HCT116 (cell line): ENCODE measurements at regions of chr11 and their contacts with region 1.

Region 1: DNA sequence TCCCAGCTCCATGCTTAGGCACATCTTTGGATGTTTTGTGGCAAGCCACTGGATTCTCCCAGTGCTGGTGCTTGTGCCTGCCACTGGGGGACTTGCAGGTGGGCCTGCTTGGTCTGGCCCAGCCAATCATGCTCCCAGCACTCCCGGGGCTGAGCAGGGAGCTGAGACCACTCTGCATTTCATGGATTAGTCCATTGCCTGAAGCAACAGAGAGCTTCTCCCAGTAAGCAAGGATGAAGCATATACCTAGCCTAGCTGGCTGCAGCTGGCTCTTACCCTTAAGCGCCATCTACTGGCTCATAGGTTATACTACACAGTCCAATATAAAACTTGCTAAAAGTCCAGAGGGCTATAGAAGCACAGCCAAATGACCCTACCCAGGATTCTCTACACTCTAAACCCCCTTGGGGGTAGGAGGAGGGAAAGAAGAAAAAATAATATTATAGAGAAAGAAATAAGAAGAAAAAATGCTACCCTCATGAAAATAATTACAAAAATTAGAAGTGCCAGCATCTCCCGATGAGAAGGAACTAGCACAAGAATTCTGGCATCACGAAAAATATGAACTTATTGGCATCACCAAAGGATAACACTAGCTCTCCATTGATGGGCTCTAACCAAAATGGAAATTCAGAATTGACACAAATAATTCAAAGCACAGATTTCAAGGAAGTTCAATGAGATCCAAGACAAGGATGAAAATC is 275.3 kb downstream of the C11orf87 start:
- DNase-seq: peak; percentile 23
- ATAC-seq: peak; percentile 93
- H3K4me3 ChIP-seq: no peak overlapping the region
- H3K27ac ChIP-seq: no peak overlapping the region
- H3K4me1 ChIP-seq: peaks cover 0 to 19% of the 10 kb centered on the region in 2 experiments; a peak in 1 of 4 replicates
- H3K27me3 ChIP-seq: no peaks in the 10 kb centered on the region
- CTCF ChIP-seq: peak; percentile 39 to 79 (median 72); a peak in 5 of 6 replicates
- POLR2A ChIP-seq: no peak
- RAD21 ChIP-seq: peak; percentile 79

Region 2: DNA sequence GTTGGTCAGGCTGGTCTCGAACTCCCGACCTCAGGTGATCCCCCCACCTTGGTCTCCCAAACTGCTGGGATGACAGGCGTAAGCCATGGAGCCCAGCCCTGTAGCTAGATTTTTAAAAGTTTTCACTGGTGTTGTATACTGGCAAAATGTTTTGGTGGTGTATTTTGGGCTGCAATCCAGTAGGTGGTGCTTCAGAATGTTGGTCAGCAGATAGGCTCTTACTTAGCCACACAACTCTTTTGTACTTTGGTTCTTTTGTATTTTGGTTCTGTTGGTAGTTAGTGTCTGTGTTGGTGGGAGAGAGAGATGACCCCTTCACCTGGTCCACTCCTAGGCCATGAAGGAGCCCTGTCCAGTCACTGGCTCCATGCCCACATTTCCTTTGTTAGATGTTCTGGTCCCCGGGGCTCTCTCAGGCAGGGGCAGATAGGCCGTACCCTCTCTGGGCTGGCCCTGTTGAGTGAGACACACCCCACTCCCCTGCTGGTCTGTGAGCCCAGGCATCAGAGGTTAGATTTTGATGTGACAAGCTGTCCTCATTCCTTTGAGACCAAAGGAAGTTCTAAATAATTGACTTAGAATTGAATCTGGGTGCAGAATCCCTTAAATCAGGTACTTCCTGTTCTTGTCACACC is 908.6 kb before region 1 on chr11:
- CTCF ChIA-PET with region 1: no interaction called
- POLR2A ChIA-PET with region 1: no interaction called
- RAD21 ChIA-PET with region 1: no interaction called
- intact Hi-C with region 1: loop called (anchors 1 kb)
- DNase-seq: peak; percentile 21
- ATAC-seq: peak; percentile 86
- H3K4me3 ChIP-seq: no peak overlapping the region
- H3K27ac ChIP-seq: peak overlapping the region; percentile 0; the same call in 1 of the 2 replicates
- H3K4me1 ChIP-seq: peaks cover 27 to 30% of the 10 kb centered on the region in 2 experiments
- H3K27me3 ChIP-seq: no peaks in the 10 kb centered on the region
- CTCF ChIP-seq: peak; percentile 34 to 59 (median 55); a peak in 5 of 6 replicates
- POLR2A ChIP-seq: no peak
- RAD21 ChIP-seq: peak; percentile 68

Region 3: DNA sequence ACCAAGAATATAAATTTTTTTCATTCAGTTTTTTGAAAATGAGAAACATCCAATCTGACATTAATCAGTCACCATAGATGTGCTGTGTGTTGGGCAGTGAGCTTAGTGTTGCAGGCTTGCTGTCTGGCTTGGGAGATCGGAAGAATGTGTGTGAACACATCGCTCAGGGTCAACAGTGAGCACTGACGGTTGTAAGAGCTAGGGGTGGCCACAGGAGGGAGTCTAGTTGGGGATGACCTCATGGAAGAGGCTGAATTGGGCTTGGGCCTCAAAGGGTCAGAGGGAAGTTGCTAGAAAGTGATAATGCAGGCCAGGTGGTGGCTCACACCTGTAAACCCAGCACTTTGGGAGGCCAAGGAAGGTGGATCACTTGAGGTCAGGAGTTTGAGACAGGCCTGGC is 657.0 kb before region 1 on chr11:
- CTCF ChIA-PET with region 1: interaction called, 3 read pairs
- POLR2A ChIA-PET with region 1: no interaction called
- RAD21 ChIA-PET with region 1: no interaction called
- intact Hi-C with region 1: loop called (anchors 2 kb)
- DNase-seq: peak; percentile 19
- ATAC-seq: peak; percentile 95
- H3K4me3 ChIP-seq: no peak overlapping the region
- H3K27ac ChIP-seq: no peak overlapping the region
- H3K4me1 ChIP-seq: no peaks in the 10 kb centered on the region
- H3K27me3 ChIP-seq: no peaks in the 10 kb centered on the region
- CTCF ChIP-seq: peak; percentile 6 to 60 (median 58); a peak in 4 of 6 replicates
- POLR2A ChIP-seq: no peak
- RAD21 ChIP-seq: peak; percentile 46

Region 4: DNA sequence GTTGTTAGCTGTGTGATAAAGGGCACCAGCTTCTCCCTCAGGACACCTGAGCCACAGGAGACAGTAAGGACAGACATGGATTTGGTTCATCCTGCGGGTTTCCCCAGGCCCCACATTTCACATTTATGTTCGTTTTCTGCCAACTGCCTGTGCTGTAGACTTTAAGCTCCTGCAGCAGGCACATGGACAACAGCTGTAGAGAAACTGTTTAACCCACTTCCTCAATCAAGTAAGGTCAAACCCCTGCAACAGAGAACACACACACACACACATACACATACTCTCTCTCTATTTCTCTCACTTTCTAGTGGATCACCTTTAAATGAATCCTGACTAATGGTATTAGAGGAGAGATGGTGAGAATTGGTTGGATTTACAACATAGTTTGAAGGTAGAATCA is 184.6 kb before region 1 on chr11:
- CTCF ChIA-PET with region 1: no interaction called
- POLR2A ChIA-PET with region 1: no interaction called
- RAD21 ChIA-PET with region 1: no interaction called
- intact Hi-C with region 1: no loop called
- DNase-seq: no peak
- ATAC-seq: no peak
- H3K4me3 ChIP-seq: no peak overlapping the region
- H3K27ac ChIP-seq: no peak overlapping the region
- H3K4me1 ChIP-seq: no peaks in the 10 kb centered on the region
- H3K27me3 ChIP-seq: no peaks in the 10 kb centered on the region
- CTCF ChIP-seq: no peak
- POLR2A ChIP-seq: no peak
- RAD21 ChIP-seq: no peak

Region 5: GRCh38 chr11:109828387-109828786 is 131.1 kb after region 1 on chr11:
- CTCF ChIA-PET with region 1: no interaction called
- POLR2A ChIA-PET with region 1: no interaction called
- RAD21 ChIA-PET with region 1: no interaction called
- intact Hi-C with region 1: no loop called
- DNase-seq: no peak
- ATAC-seq: no peak
- H3K4me3 ChIP-seq: no peak overlapping the region
- H3K27ac ChIP-seq: no peak overlapping the region
- H3K4me1 ChIP-seq: no peaks in the 10 kb centered on the region
- H3K27me3 ChIP-seq: no peaks in the 10 kb centered on the region
- CTCF ChIP-seq: no peak
- POLR2A ChIP-seq: no peak
- RAD21 ChIP-seq: no peak